CD4-positive, alpha-beta memory T cell (primary cell): ENCODE measurements at regions of chr16 and their contacts with region 1.

Region 1: DNA sequence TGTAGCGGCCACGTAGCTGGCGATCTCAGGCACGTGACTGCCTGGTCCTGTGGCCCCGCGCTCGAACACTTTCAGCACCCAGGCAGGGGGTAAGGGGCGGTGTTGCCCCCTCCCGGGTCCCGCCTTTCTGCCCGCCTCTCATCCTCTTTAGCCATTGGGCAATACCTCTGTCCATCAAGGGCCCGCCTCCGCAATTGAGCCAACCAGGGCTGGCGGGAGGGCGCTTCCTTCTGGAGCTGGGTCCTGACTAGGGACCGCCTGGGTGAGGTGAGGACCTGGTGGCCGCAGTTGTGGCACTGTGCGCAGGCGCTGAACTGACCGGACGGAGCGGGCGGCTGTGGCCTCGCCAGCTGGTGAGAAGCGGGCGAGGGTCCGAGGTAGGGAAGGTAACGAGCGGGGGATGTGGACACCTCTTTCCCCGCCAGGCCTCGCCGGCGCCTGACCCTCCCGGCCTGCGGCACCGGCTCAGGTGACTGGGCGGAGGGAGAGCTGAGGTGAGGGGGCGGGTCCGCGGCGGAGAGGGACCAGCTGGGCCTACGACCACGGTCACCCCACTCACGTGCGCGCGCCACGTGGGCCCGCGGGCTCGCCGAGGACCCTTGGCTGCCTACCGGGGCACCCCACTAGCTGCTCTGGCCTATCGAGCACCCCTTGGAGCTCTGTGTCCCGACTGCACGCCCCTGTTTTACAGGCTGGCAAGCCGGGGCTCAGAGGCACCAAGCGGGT is at the start of gene PDP2:
- DNase-seq: peak; percentile 88 to 91 (median 89)
- H3K4me3 ChIP-seq: peak within 1 kb of the TSS; percentile 66 to 80
- H3K4me3 Mint-ChIP-seq: peak within 1 kb of the TSS; percentile 97 to 100 (median 99)
- H3K27ac ChIP-seq: peak within 1 kb of the TSS; percentile 54
- H3K27ac Mint-ChIP-seq: peak within 1 kb of the TSS; percentile 79 to 96 (median 94)
- H3K4me1 ChIP-seq: peaks cover 22% of the 10 kb centered on the region
- H3K4me1 Mint-ChIP-seq: peaks cover 13 to 39% (median 27%) of the 10 kb centered on the region in 4 donors
- H3K27me3 ChIP-seq: no peaks in the 10 kb centered on the region
- H3K27me3 Mint-ChIP-seq: no peaks in the 10 kb centered on the region
- total RNA-seq, gene PDP2: 16.3 to 19.3 TPM

Region 2: DNA sequence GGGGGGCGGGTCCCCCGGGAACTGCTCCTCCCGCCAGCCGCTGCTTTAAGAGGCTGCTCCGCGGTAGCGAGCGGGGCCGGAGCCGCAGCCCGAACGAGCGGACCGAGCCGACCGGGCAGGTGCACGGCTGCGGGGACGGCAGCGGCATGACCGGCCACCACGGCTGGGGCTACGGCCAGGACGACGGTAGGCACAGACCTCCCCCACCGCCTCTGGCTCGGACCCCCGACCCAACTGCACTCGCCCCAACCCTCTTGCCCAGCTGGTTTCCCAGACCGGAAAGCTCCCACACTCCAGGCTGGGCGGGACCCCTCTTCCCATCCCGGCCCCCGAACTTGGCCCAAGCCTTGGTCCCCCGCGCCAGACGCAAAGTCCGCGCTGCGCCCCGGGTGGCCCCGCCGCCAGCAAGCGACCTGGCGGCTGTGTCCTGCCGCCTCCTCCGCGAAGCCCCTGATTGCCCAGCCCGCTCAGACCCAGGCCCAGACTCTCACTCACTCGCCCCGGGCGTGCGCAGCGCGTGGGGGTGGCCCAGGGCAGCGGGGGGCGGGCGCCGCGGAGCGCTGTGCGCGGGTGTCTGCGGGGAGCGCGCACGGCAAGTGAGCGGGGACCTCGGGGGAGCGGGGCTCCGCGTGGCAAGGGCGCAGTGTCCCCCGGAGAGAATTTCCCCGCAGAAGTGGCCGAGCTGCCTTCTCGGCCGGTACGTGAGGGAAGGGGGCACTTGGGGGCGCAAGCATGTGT is 35.9 kb before region 1 on chr16 and contains the start of gene CA7:
- CTCF ChIA-PET with region 1: no interaction called
- POLR2A ChIA-PET with region 1: no interaction called
- intact Hi-C with region 1: no loop called
- DNase-seq: no peak
- H3K4me3 ChIP-seq: no peak within 1 kb of the TSS
- H3K4me3 Mint-ChIP-seq: peak within 1 kb of the TSS in 7 of 8 donors; percentile 27 to 80 (median 68)
- H3K27ac ChIP-seq: no peak within 1 kb of the TSS
- H3K27ac Mint-ChIP-seq: no peak within 1 kb of the TSS
- H3K4me1 ChIP-seq: no peaks in the 10 kb centered on the region
- H3K4me1 Mint-ChIP-seq: peaks cover 2 to 10% (median 8%) of the 10 kb centered on the region in 4 donors
- H3K27me3 ChIP-seq: peaks cover 17% of the 10 kb centered on the region
- H3K27me3 Mint-ChIP-seq: peaks cover 31 to 33% of the 10 kb centered on the region in 2 donors
- total RNA-seq, gene CA7: not detected

Region 3: GRCh38 chr16:66894948-66895688 is 14.7 kb after region 1 on chr16:
- CTCF ChIA-PET with region 1: interaction called, 10 read pairs
- POLR2A ChIA-PET with region 1: interaction called, 6 read pairs
- intact Hi-C with region 1: no loop called
- DNase-seq: peak; percentile 42 to 61 (median 53)
- H3K4me3 ChIP-seq: no peak overlapping the region
- H3K4me3 Mint-ChIP-seq: no peak overlapping the region
- H3K27ac ChIP-seq: no peak overlapping the region
- H3K27ac Mint-ChIP-seq: peak overlapping the region in 3 of 7 donors; percentile 14 to 78 (median 42)
- H3K4me1 ChIP-seq: peaks cover 3% of the 10 kb centered on the region
- H3K4me1 Mint-ChIP-seq: peaks cover 3 to 12% (median 9%) of the 10 kb centered on the region in 4 donors
- H3K27me3 ChIP-seq: no peaks in the 10 kb centered on the region
- H3K27me3 Mint-ChIP-seq: no peaks in the 10 kb centered on the region

Region 4: DNA sequence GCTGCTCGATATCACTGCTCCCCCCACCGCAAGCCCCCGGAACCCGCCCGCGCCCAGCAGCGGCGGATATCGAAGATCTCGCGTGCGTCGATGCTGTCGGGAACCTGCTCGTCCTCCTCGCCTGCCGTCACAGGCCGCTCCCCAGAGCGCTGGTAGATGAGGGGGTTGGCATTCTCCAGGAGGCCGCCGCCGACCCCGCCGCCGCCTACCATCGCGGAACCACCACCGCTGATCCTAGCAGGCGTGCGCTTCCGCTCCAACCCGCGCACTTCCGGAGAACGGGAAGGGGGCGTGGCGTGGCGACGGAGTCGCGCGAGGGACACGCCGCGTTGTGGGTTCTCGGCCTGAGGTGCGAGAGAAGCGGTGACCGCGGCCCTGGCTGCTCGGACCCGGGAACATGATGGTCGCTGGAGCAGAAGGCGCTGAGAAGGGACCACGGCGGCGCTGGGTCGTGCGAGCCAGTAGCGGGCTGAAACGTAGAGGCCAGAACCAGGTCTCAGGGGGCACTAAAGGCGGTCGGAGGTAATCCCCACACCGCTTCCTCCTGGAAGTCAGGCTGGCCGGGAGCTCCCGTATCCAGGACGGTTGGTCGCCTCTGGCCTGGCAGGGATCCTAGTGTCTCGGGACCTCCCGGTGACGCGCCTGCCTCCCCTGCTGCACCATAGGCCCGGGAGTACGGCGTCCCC is 53.8 kb after region 1 on chr16 and contains the start of gene CIAO2B:
- CTCF ChIA-PET with region 1: no interaction called
- POLR2A ChIA-PET with region 1: interaction called, 13 read pairs
- intact Hi-C with region 1: no loop called
- DNase-seq: peak; percentile 88 to 93 (median 90)
- H3K4me3 ChIP-seq: peak within 1 kb of the TSS; percentile 88 to 98
- H3K4me3 Mint-ChIP-seq: peak within 1 kb of the TSS; percentile 93 to 100 (median 99)
- H3K27ac ChIP-seq: peak within 1 kb of the TSS; percentile 97
- H3K27ac Mint-ChIP-seq: peak within 1 kb of the TSS; percentile 97 to 99 (median 99)
- H3K4me1 ChIP-seq: peaks cover 49% of the 10 kb centered on the region
- H3K4me1 Mint-ChIP-seq: peaks cover 31 to 72% (median 51%) of the 10 kb centered on the region in 4 donors
- H3K27me3 ChIP-seq: no peaks in the 10 kb centered on the region
- H3K27me3 Mint-ChIP-seq: no peaks in the 10 kb centered on the region
- total RNA-seq, gene CIAO2B: 72.7 to 75.0 TPM